CD4-positive, alpha-beta T cell (primary cell): ENCODE measurements at regions of chr2 and their contacts with region 1.

Region 1: DNA sequence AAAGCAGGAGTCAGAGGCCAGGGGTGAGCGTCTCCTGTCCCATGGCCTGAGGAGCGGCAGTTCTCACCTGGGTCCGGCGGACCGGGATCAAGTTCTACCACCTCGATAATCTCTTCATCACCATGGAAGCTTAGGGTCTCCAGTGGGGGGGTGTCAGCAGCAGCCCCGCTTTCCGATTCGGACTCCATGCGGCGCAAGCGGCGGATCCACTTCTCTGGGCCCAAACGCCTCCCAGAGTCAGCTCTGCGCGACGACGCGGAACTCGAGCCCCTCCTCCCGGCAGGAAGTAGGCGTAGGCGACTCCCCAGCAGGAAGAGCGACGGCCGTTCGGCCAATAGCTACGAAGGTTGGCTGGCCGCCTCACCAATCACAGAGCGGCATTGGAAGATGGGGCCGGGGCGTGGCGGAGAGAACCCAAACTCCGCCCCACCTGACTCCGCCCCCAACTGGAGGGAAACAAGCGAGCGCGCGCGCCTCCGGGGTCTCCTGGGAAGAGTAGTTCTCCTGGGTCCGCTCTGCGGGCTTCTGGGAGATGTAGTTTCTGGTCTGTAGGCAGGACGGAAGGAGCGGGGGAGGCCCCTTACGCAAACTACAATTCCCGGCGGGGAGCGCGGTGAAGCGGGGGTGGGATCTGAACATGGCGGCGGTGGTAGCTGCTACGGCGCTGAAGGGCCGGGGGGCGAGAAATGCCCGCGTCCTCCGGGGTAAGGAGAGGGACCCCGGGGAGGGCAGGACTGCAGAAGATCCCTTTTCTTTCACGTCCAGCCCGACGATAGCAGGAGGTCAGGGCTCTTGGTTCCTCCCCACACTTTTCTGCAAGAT is at the starts of genes AAMP and PNKD:
- DNase-seq: peak; percentile 100
- ATAC-seq: peak; percentile 90
- H3K4me3 ChIP-seq: peak within 1 kb of the TSS; percentile 93
- H3K4me3 Mint-ChIP-seq: peak within 1 kb of the TSS; percentile 88
- H3K27ac ChIP-seq: peak within 1 kb of the TSS; percentile 69 to 80
- H3K27ac Mint-ChIP-seq: peak within 1 kb of the TSS; percentile 78
- H3K4me1 ChIP-seq: peaks cover 65% of the 10 kb centered on the region
- H3K4me1 Mint-ChIP-seq: peaks cover 54% of the 10 kb centered on the region
- H3K27me3 ChIP-seq: no peaks in the 10 kb centered on the region
- H3K27me3 Mint-ChIP-seq: no peaks in the 10 kb centered on the region
- CTCF ChIP-seq: peak; percentile 22
- total RNA-seq, gene AAMP: 40.2 to 42.5 TPM
- total RNA-seq, gene PNKD: 9.2 to 10.6 TPM

Region 2: DNA sequence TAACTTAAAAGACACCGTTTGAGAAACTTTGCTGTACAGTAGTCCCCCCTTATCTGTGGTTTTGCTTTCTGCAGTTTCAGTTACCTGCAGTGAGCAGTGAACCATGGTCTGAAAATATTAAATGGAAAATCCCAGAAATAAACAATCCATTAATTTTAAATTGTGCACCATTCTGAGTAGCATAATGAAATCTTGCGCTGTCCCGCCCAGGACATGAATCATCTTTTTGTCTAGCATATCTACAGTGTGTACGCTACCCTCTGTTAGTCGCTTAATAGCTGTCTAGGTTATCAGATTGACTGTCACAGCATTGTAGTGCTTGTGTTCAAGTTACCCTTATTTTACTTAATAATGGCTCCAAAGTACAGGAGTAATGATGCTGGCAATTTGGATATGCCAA is 47.1 kb before region 1 on chr2:
- CTCF ChIA-PET with region 1: interaction called, 10 read pairs
- POLR2A ChIA-PET with region 1: interaction called, 18 read pairs
- intact Hi-C with region 1: no loop called
- DNase-seq: peak in 6 of 14 experiments; percentile 11 to 50 (median 37)
- ATAC-seq: peak; percentile 50
- H3K4me3 ChIP-seq: peak overlapping the region; percentile 4
- H3K4me3 Mint-ChIP-seq: peak overlapping the region; percentile 67
- H3K27ac ChIP-seq: peak overlapping the region; percentile 12 to 45
- H3K27ac Mint-ChIP-seq: peak overlapping the region; percentile 96
- H3K4me1 ChIP-seq: peaks cover 86% of the 10 kb centered on the region
- H3K4me1 Mint-ChIP-seq: peaks cover 91% of the 10 kb centered on the region
- H3K27me3 ChIP-seq: no peaks in the 10 kb centered on the region
- H3K27me3 Mint-ChIP-seq: no peaks in the 10 kb centered on the region
- CTCF ChIP-seq: no peak

Region 3: DNA sequence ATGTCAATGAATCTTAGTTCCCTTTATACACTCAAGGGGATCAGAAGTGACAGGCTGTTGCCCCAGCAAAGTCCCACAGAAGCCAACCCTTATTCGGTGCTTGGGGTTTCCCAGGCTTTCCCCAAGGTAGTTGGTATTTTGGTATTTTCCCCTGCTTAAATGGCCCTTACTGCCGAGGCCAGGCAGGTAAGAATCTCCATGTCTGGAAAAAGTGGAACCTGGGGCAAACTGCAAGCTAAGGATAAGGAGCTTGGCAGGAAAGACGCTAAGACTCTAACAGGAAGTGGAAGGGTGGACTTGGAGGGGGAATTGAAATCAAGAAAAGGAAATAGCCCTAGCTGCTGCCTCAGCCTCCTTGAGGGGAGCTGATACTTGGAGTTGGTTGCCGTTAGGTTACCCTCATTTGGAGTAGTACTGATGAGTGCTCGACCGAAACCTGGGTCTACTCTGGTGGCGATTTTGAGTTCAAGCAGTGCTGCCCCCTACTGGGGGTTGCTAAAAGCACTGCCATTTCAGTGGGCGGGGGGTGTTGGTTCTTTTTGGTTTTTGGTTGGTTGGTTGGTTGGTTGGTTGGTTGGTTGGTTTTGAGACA is 12.6 kb before region 1 on chr2:
- CTCF ChIA-PET with region 1: interaction called, 4 read pairs
- POLR2A ChIA-PET with region 1: interaction called, 11 read pairs
- intact Hi-C with region 1: no loop called
- DNase-seq: peak; percentile 43 to 84 (median 58)
- ATAC-seq: peak; percentile 80
- H3K4me3 ChIP-seq: no peak overlapping the region
- H3K4me3 Mint-ChIP-seq: peak overlapping the region; percentile 51
- H3K27ac ChIP-seq: peak overlapping the region; percentile 56 to 67
- H3K27ac Mint-ChIP-seq: peak overlapping the region; percentile 91
- H3K4me1 ChIP-seq: peaks cover 22% of the 10 kb centered on the region
- H3K4me1 Mint-ChIP-seq: peaks cover 22% of the 10 kb centered on the region
- H3K27me3 ChIP-seq: no peaks in the 10 kb centered on the region
- H3K27me3 Mint-ChIP-seq: no peaks in the 10 kb centered on the region
- CTCF ChIP-seq: peak; percentile 64

Region 4: DNA sequence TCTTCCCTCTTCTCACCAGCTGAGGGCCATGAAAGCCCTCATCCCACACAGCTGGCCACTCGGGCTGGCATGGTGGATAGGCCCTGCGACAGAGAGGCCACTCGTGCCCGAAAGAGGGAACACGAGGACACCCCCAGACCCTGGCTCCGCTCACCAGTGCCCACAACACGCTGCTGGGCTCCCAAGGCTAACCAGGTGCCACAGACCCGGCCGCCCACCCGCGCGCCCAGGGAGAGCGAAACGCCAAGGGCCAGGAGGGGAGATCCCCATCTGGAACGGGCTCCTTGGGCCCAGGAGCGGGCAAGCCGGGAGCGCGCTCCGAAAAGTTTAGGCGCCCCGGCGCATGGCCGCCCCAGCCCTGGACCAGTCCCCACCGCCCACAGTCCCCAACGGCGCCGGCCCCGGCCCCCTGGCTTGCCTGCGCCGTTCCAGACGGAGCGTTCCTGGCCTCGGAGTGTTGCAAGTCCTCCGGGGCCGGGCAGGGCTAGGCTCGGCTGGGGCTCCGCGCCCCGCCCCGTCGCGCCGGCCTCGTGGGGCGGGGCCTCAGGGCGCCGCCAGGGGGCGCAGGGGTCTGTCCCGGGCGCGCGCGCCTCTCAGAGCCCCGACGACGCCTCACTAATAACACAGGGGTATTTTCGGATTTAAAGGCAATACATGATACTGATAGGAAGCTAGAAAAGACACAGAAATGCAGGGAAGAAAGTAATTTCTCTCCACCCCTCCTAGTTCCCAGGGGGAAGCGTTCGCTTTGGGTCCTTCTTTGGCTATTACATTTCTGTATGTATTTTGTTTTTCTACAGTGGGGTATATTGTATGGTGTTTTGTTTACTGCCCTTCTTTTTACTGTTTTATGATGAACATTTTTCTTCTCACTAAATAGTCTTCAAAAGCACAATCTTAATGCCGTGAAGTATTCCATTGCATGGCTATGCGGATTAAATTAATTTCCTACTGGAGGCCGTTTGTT is 22.2 kb after region 1 on chr2 and contains the start of gene TMBIM1:
- CTCF ChIA-PET with region 1: interaction called, 68 read pairs
- POLR2A ChIA-PET with region 1: interaction called, 221 read pairs
- intact Hi-C with region 1: loop called (anchors 1 kb)
- DNase-seq: peak; percentile 62 to 92 (median 76)
- ATAC-seq: peak; percentile 76
- H3K4me3 ChIP-seq: peak within 1 kb of the TSS; percentile 99
- H3K4me3 Mint-ChIP-seq: peak within 1 kb of the TSS; percentile 95
- H3K27ac ChIP-seq: peak within 1 kb of the TSS; percentile 89 to 96
- H3K27ac Mint-ChIP-seq: peak within 1 kb of the TSS; percentile 99
- H3K4me1 ChIP-seq: peaks cover 73% of the 10 kb centered on the region
- H3K4me1 Mint-ChIP-seq: peaks cover 62% of the 10 kb centered on the region
- H3K27me3 ChIP-seq: no peaks in the 10 kb centered on the region
- H3K27me3 Mint-ChIP-seq: no peaks in the 10 kb centered on the region
- CTCF ChIP-seq: peak; percentile 59
- total RNA-seq, gene TMBIM1: 99.2 to 102 TPM

Region 5: DNA sequence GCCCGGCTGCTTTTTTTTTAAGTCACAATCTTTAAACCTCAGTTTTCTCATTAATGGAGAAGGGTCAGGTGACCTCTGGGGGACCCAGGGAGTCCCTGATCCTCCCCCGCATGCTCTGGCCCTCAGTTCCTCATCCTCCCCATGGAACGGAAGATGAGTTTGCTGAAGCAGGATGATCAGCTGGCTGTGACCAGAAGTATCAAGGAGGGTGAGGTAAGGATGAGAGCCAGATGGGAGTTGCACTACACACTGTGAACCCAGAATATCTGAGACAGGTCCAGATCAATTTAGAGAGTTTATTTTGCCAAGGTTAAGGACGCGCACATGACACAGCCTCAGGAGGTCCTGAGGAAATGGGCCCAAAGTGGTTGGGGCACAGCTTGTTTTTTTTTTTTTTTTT is 90.3 kb after region 1 on chr2:
- CTCF ChIA-PET with region 1: interaction called, 21 read pairs
- POLR2A ChIA-PET with region 1: interaction called, 5 read pairs
- intact Hi-C with region 1: loop called (anchors 1 kb)
- DNase-seq: peak in 2 of 14 experiments; percentile 45 to 63
- ATAC-seq: no peak
- H3K4me3 ChIP-seq: no peak overlapping the region
- H3K4me3 Mint-ChIP-seq: no peak overlapping the region
- H3K27ac ChIP-seq: no peak overlapping the region
- H3K27ac Mint-ChIP-seq: no peak overlapping the region
- H3K4me1 ChIP-seq: peaks cover 8% of the 10 kb centered on the region
- H3K4me1 Mint-ChIP-seq: peaks cover 2% of the 10 kb centered on the region
- H3K27me3 ChIP-seq: no peaks in the 10 kb centered on the region
- H3K27me3 Mint-ChIP-seq: no peaks in the 10 kb centered on the region
- CTCF ChIP-seq: no peak

Region 6: GRCh38 chr2:218466016-218466521 is 196.0 kb after region 1 on chr2:
- CTCF ChIA-PET with region 1: no interaction called
- POLR2A ChIA-PET with region 1: no interaction called
- intact Hi-C with region 1: loop called (anchors 1 to 2 kb)
- DNase-seq: peak in 3 of 14 experiments; percentile 13 to 31 (median 30)
- ATAC-seq: no peak
- H3K4me3 ChIP-seq: no peak overlapping the region
- H3K4me3 Mint-ChIP-seq: no peak overlapping the region
- H3K27ac ChIP-seq: no peak overlapping the region
- H3K27ac Mint-ChIP-seq: no peak overlapping the region
- H3K4me1 ChIP-seq: no peaks in the 10 kb centered on the region
- H3K4me1 Mint-ChIP-seq: peaks cover 7% of the 10 kb centered on the region
- H3K27me3 ChIP-seq: no peaks in the 10 kb centered on the region
- H3K27me3 Mint-ChIP-seq: no peaks in the 10 kb centered on the region
- CTCF ChIP-seq: peak; percentile 74

Region 7: DNA sequence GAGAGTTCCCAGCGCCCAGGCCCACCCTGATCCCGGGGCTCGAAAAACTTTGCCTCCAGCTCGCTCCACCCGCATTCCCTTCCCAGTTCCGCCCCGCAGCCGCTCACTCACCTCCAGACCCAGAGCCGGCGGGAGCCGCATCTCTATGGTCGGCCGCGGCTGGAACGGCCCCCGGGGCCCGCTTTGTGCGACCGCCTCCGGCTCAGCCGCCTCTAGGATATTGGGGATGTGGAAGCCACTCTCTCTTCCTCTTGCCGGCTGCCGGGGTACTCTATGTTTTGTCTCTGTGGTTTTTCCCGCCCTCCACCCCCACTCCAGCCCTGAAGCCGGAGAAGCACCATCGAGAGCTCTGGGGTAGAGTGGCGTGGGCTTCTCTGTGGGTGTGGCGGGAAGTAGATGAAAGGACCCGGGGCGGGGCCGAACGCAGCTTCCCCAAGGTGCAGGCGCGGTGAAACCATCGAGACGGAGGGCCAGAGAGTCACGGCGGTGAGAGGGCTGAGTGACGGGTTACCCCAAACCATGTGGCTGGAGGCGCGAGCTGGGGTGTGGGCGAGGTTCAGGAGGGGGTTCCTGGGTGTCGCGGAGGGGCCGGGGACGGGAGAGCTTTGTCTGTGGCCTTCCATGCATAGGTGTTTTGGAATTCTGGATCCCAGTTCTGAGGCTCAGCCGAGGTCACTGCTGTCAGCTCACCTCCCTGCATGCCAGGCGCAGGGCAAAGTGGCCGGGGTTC is 389.3 kb after region 1 on chr2 and contains the starts of genes BCS1L and ZNF142:
- CTCF ChIA-PET with region 1: no interaction called
- POLR2A ChIA-PET with region 1: interaction called, 10 read pairs
- intact Hi-C with region 1: loop called in 1 of 2 experiments (anchors 5 kb)
- DNase-seq: peak; percentile 82 to 95 (median 92)
- ATAC-seq: peak; percentile 98
- H3K4me3 ChIP-seq: peak within 1 kb of the TSS; percentile 79
- H3K4me3 Mint-ChIP-seq: peak within 1 kb of the TSS; percentile 95
- H3K27ac ChIP-seq: peak within 1 kb of the TSS; percentile 53 to 83
- H3K27ac Mint-ChIP-seq: peak within 1 kb of the TSS; percentile 89
- H3K4me1 ChIP-seq: peaks cover 19% of the 10 kb centered on the region
- H3K4me1 Mint-ChIP-seq: peaks cover 35% of the 10 kb centered on the region
- H3K27me3 ChIP-seq: no peaks in the 10 kb centered on the region
- H3K27me3 Mint-ChIP-seq: no peaks in the 10 kb centered on the region
- CTCF ChIP-seq: no peak
- total RNA-seq, gene BCS1L: 11.4 to 12.7 TPM
- total RNA-seq, gene ZNF142: 40.3 to 44.2 TPM